ENCODE measurements at regions of chr2 and their contacts with region 1.

Region 1: DNA sequence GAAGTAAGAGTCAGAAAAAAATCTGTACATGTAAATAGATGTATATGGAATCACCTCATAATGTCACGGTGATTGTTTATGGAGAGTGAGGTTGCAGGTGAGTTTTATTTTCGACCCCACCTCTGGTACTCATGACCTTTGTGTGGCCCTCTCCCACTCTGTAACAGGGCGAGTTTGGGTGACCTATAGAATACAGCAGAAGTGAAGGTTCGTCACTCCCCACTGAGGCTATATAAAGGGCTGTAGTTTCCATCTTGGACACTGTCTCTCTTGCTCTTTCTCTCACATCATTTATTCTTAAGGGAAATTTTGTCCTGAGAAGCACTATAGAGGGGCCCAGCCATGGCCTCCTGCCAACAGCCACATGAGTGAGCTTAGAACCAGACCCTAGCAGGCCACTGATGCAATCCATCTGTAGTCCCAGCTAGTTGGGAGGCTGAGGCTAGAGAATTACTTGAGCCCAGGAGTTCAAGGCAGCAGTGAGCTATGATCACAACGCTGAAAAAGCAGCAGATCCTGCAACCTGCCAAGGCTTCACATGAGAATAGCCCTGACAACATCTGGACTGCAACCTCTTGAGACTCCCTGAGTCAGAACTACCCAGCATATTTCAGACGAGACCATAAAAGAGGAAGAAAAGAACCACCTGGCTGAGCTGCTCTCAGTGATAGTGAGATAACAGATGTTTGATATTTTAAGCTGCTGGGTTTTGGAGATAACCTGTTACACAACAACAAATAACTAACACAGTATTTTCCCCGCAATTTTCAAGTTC is 74.3 kb upstream of the SLC1A4 start:
- DNase-seq: no peak
- H3K4me3 Mint-ChIP-seq: no peak overlapping the region
- H3K27ac Mint-ChIP-seq: no peak overlapping the region
- H3K4me1 Mint-ChIP-seq: peaks cover 41% of the 10 kb centered on the region
- H3K27me3 Mint-ChIP-seq: no peaks in the 10 kb centered on the region

Region 2: GRCh38 chr2:64904413-64905329 is 10.3 kb before region 1 on chr2:
- CTCF ChIA-PET with region 1: interaction called, 12 read pairs
- POLR2A ChIA-PET with region 1: no interaction called
- DNase-seq: no peak
- H3K4me3 Mint-ChIP-seq: no peak overlapping the region
- H3K27ac Mint-ChIP-seq: no peak overlapping the region
- H3K4me1 Mint-ChIP-seq: peaks cover 1% of the 10 kb centered on the region
- H3K27me3 Mint-ChIP-seq: peaks cover 8% of the 10 kb centered on the region

Region 3: DNA sequence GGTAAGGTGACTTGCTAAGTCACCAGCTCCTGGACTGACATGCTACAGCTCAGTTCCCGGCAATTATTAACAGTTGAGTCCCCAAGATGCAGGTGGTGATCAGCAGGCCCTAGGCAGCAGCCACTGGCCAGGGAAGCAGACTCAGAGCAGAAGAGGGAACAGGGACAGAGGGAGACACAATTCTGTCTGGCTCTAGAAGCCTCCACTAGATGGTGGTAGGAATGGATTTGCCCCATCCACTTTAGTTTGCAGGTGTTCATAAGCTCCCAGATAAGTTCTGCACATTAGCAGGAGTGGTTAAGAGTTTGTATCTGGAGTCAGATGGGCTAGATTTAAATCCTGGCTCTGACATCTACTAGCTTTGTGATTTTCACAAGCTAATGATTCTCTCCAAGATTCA is 48.8 kb after region 1 on chr2:
- CTCF ChIA-PET with region 1: interaction called, 10 read pairs
- POLR2A ChIA-PET with region 1: no interaction called
- DNase-seq: no peak
- H3K4me3 Mint-ChIP-seq: no peak overlapping the region
- H3K27ac Mint-ChIP-seq: no peak overlapping the region
- H3K4me1 Mint-ChIP-seq: no peaks in the 10 kb centered on the region
- H3K27me3 Mint-ChIP-seq: peaks cover 5% of the 10 kb centered on the region

Region 4: DNA sequence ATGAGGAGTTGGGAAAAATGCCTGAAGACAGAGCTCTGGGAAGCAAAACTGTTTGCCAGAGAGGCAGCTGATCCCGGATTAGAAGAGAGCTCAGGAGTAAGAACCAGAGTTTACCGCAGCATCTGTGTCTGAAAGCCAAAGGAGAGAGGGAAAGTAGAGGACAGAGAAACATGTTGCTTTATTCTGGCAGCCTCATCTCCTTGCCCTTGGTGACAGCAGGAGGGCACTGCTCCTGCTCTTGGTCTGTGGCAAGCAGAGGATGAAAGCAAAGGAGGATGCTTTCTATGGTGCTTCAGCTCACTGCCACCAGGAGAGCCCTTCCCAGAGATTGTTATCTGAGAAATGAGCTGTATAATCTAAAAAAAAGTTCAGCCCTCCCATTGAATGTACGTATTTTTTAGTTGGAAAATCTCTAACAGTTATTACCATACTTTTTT is 82.0 kb after region 1 on chr2:
- CTCF ChIA-PET with region 1: interaction called, 17 read pairs
- POLR2A ChIA-PET with region 1: interaction called, 5 read pairs
- DNase-seq: no peak
- H3K4me3 Mint-ChIP-seq: no peak overlapping the region
- H3K27ac Mint-ChIP-seq: no peak overlapping the region
- H3K4me1 Mint-ChIP-seq: peaks cover 53% of the 10 kb centered on the region
- H3K27me3 Mint-ChIP-seq: no peaks in the 10 kb centered on the region

Region 5: GRCh38 chr2:65040400-65041261 is 125.7 kb after region 1 on chr2:
- CTCF ChIA-PET with region 1: interaction called, 33 read pairs
- POLR2A ChIA-PET with region 1: interaction called, 5 read pairs
- DNase-seq: peak; percentile 80
- H3K4me3 Mint-ChIP-seq: peak overlapping the region; percentile 28
- H3K27ac Mint-ChIP-seq: no peak overlapping the region
- H3K4me1 Mint-ChIP-seq: peaks cover 14% of the 10 kb centered on the region
- H3K27me3 Mint-ChIP-seq: no peaks in the 10 kb centered on the region

Region 6: DNA sequence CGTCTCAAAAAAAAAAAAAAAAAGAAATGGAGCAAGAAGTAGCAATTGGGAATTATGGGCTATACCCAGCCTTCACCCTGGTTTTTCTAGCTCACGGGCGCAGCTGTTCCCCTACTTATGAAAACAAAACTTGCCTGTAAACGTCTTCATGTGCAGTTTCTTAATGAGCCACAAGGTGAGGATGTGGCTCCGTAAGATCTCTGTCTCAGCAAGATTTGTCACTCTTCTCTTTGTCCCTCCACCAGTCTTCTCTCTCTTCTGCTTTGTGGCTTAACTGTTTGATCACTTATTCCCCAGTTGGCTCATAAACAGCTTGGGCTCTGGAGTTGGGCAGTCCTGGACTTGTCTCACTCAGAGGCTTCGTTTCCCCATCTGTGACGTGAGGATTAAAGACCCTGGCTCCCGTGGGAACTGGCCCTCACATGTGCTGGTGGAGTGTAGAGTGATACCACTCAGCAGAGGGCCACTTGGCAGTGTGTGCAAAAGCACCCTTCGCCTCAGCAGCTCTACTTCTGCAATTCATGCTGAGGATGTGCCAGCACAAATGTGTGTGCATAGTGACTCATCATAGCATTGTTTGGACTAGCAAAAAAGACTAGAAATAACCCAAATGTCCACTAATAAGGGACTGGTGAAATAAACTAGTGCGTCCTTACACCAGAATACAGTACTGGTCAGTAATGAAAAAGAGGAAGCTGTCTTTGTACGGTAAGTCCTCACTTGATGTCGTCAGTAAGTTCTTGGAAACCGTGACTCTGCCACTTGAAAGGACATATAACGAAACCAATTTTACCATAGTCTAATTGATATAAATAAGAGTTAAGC is 150.0 kb after region 1 on chr2:
- CTCF ChIA-PET with region 1: interaction called, 18 read pairs
- POLR2A ChIA-PET with region 1: interaction called, 5 read pairs
- DNase-seq: peak; percentile 62
- H3K4me3 Mint-ChIP-seq: no peak overlapping the region
- H3K27ac Mint-ChIP-seq: peak overlapping the region; percentile 76
- H3K4me1 Mint-ChIP-seq: peaks cover 35% of the 10 kb centered on the region
- H3K27me3 Mint-ChIP-seq: no peaks in the 10 kb centered on the region